Right cardiac atrium (tissue), 5 donors: ENCODE measurements at regions of chr2 and their contacts with region 1.

Region 1: DNA sequence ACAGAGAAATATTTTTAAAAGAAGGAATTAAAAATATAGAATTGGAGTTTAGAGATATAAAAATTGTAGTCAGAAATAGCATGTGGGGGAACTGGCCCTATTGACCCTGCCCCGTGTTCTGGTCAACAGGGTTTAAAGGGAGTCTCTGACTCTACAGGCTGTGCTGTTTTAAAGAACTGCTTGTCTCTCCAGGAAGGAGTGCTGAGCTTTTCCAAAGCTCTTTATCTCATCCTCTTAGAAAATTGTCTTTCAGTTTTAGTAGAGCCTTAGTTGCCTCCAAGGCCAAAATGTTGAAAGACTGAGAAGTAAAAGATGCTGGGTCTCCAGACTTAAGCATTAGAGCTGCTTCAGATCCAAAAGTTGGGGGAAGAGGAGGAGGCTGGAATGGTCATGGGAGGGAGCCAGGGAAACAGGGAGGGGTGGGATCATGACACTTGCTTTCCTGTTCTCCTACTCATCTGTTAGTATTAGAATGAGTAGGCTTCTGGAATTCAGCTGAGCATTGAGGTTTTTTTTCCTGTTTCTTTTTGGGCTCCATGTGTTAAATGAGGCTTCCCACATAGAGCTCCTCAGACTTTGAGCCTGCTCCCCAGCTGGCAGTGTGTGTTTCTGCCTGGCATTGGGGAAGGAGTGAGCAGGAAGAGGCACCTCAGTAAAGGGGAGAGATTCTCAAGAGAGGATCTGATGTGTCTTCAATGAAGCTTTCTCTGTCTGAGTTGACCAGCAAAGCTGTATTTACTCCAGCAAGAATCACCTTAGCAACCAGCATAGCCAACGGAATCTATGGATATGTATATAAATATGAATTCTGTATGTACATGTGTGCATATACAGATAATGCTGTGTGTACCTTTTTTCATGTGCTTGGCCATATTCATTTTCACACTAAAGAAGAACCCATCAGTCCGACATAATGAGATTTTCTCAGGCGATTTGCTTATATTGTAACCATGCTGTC is 186.8 kb upstream of the FBXO11 start:
- DNase-seq: no peak
- ATAC-seq: peak in 1 of 2 donors; percentile 79
- H3K4me3 ChIP-seq: no peak overlapping the region
- H3K27ac ChIP-seq: no peak overlapping the region
- H3K4me1 ChIP-seq: peaks cover 2% of the 10 kb centered on the region
- H3K27me3 ChIP-seq: no peaks in the 10 kb centered on the region

Region 2: GRCh38 chr2:47437287-47437686 is 655.8 kb before region 1 on chr2:
- intact Hi-C with region 1: loop called in 1 of 4 experiments (anchors 10 kb)
- DNase-seq: no peak
- ATAC-seq: peak in 1 of 2 donors; percentile 42
- H3K4me3 ChIP-seq: no peak overlapping the region
- H3K27ac ChIP-seq: no peak overlapping the region
- H3K4me1 ChIP-seq: no peaks in the 10 kb centered on the region
- H3K27me3 ChIP-seq: no peaks in the 10 kb centered on the region

Region 3: DNA sequence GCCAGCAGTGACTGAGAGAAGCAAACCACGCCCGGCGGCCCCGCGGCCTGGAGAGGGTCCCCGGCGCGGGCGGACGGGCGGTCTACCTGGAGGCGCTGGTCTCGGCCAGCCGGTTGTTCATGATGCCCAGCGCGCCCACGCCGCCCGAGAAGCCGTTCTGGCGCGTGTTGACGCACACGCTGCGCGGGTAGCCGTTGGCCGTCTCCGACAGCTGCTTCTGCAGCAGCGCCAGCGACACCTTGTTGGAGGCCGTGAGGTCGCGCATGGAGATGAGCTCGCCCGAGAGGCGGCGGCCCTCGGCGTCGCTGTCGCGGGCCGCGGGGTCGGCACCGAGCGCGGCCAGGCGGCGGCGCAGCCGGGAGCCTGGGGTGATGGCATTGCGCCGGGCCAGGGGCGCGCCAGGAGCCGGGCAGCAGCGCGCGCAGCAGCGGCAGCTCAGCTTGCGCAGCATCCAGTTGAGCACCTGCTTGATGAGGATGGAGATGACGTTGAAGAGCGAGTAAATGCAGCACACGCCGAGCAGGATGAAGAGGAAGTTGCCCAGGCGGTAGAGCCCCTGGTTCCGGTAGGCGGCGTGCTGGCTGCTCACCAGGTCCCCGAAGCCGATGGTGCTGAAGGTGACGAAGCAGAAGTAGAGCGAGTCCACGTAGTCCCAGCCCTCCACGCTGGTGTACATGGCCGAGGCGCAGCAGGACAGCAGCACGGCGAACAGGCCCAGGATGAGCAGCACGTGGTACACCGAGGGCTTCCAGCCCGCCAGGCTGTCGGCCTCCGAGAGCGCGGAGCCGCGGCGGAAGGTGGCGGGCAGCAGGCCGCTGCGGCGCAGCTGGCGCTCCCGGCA is 572.1 kb before region 1 on chr2:
- intact Hi-C with region 1: no loop called
- DNase-seq: peak; percentile 33 to 71 (median 69)
- ATAC-seq: peak; percentile 54 to 66
- H3K4me3 ChIP-seq: peak overlapping the region; percentile 4
- H3K27ac ChIP-seq: no peak overlapping the region
- H3K4me1 ChIP-seq: no peaks in the 10 kb centered on the region
- H3K27me3 ChIP-seq: no peaks in the 10 kb centered on the region

Region 4: GRCh38 chr2:47872941-47873340 is 220.2 kb before region 1 on chr2:
- intact Hi-C with region 1: no loop called
- DNase-seq: no peak
- ATAC-seq: no peak
- H3K4me3 ChIP-seq: no peak overlapping the region
- H3K27ac ChIP-seq: no peak overlapping the region
- H3K4me1 ChIP-seq: peaks cover 4% of the 10 kb centered on the region
- H3K27me3 ChIP-seq: no peaks in the 10 kb centered on the region